ENCODE measurements at regions of chr7 and their contacts with region 1.

Region 1: DNA sequence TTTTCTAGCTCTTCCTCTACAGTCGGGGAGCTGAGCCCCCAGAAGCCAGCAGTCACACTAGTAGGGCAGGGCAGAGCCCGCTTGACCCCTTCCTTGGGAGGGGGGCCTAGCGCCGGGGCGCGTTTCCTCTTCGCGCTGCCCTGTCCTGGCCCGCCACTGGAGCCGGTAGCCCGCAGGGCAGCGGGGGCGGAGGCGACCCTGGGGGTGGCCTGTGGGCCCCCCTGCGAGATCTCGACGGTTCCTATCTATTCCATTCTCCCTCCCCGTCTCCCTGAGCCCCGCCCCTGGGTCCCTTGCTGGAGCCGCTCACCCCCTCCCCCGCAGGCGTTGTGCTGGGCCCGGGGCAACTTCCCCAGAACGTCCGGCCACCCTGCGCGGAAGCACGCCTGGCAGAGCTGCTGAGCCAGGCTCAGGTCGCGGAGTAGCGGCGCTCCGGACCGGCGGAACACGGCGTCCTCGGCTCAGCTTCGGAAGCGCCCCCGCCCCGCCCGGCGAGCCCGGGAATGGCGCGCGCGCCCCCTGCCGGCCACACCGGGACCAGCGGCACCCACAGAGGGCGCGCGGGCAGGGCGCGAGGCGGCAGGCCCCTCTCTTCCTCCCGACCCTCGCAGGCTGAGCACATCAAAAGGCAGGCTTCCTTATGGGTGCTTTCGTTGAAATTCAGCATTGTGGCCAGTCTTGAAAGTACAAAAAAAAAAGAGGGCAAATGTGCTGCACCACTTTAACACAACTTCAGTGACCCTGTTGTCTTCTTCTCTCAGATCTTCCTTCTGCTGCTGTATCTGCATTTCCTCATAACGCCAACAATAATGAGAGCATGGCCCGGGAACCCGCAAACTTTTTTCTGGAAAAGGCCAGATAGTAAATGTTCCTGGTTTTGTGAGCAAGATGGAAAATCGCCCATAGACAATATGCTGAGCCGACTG is 327.6 kb downstream of the TNS3 start:
- DNase-seq: peak; percentile 28 to 84
- H3K4me3 ChIP-seq: peak overlapping the region; percentile 45
- H3K4me1 ChIP-seq: peaks cover 5% of the 10 kb centered on the region
- H3K27me3 ChIP-seq: no peaks in the 10 kb centered on the region; the same call in 1 of the 2 replicates

Region 2: DNA sequence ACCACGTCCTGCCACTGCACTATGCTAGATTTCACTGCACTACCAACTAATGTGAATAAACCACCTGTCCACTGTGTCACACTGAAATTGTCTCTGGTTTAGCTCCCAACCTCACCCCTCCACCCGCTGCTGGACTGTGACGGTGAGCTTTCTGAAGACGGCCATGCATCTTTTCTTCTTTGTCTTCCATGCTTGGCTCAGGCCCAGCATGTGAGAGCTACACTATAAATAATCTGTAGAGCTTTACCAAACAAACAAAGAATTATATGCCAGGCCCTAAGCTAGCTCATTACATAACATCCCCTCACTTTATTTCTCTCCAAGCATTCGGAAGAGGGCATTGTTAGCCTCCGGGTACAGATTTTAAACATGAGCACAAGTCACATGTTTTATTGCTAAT is 305.6 kb before region 1 on chr7:
- in situ Hi-C with region 1: no loop called
- DNase-seq: no peak
- H3K4me3 ChIP-seq: no peak overlapping the region
- H3K4me1 ChIP-seq: no peaks in the 10 kb centered on the region
- H3K27me3 ChIP-seq: no peaks in the 10 kb centered on the region

Region 3: GRCh38 chr7:46982928-46983327 is 271.4 kb before region 1 on chr7:
- in situ Hi-C with region 1: no loop called
- DNase-seq: no peak
- H3K4me3 ChIP-seq: no peak overlapping the region
- H3K4me1 ChIP-seq: no peaks in the 10 kb centered on the region
- H3K27me3 ChIP-seq: no peaks in the 10 kb centered on the region

Region 4: DNA sequence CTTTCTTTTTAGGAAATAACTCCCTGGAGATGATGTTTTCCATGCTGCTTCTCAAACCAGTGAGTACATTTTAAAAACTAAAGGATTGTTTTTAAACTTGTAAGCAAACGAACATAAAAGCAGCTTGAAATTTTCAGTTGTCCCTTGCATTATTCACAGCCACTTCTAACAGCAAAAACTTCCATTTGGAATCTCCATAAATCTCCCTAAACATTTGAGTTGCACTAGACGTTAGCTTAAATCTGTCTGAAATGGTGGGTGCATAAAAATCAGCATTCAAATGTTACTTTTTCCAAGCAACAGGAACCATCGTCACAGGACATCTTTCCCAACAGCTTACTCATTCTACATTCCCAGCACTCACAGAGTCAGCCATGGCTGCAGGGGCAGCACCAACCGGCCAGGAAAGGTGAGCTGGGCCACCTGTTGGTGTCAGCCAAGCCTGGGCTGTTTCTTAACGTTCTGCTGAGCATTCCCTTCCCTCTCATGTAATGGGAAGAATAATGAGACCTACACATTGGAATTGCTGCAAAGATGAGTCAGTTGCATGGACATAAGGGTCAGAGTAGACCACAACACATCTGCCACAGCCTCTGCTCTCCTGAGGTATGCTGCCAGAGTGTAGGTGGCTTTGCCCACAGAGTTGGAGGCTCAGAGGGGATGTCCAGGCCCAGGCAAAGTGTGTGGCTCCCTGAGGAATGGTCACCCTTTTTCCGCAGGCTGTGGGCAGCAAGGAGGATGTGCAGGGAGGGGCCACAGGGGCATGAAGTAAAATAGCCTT is 164.4 kb after region 1 on chr7:
- in situ Hi-C with region 1: no loop called
- DNase-seq: no peak
- H3K4me3 ChIP-seq: no peak overlapping the region
- H3K4me1 ChIP-seq: no peaks in the 10 kb centered on the region
- H3K27me3 ChIP-seq: no peaks in the 10 kb centered on the region

Region 5: DNA sequence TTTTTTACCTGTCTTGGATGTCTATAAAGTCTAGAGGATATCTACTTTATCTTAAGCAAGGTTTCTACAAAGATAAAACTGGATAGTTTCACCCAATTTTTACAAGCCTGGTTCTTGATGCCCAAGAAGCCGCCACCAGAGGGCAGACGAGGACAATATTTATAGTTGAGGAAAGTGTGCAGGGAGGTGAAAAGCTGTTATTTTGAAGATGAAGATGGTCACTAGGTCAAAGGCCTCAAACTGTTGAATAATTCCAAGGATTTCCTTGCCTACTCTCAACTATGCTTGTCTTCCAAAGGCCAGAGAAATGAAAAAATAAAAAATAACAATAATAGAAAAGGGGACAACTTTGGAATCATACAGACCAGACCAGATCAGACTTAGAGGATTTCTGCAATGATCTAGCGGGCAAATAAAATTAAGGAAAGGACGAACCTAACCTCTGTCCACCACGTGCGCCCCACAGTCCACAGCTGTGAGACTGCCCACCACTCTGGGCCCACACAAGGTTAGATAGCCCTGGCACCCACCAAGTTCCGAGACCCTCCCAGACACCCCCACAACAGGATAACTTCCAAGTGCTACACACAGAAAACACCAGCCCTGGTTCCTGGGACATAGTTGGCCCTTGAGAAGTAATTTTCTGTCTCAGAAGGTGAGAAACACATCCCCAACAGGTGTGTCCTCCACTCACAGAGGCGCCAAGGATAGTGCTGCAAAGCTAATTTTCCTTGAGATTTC is 691.1 kb after region 1 on chr7:
- in situ Hi-C with region 1: loop called (anchors 25 kb)
- DNase-seq: peak; percentile 28 to 88
- H3K4me3 ChIP-seq: no peak overlapping the region
- H3K4me1 ChIP-seq: no peaks in the 10 kb centered on the region
- H3K27me3 ChIP-seq: no peaks in the 10 kb centered on the region

Region 6: GRCh38 chr7:48109848-48110663 is 855.7 kb after region 1 on chr7:
- in situ Hi-C with region 1: loop called (anchors 25 kb)
- DNase-seq: peak; percentile 41 to 85
- H3K4me3 ChIP-seq: no peak overlapping the region
- H3K4me1 ChIP-seq: no peaks in the 10 kb centered on the region
- H3K27me3 ChIP-seq: no peaks in the 10 kb centered on the region